ENCODE measurements at regions of chr17 and their contacts with region 1.

Region 1: DNA sequence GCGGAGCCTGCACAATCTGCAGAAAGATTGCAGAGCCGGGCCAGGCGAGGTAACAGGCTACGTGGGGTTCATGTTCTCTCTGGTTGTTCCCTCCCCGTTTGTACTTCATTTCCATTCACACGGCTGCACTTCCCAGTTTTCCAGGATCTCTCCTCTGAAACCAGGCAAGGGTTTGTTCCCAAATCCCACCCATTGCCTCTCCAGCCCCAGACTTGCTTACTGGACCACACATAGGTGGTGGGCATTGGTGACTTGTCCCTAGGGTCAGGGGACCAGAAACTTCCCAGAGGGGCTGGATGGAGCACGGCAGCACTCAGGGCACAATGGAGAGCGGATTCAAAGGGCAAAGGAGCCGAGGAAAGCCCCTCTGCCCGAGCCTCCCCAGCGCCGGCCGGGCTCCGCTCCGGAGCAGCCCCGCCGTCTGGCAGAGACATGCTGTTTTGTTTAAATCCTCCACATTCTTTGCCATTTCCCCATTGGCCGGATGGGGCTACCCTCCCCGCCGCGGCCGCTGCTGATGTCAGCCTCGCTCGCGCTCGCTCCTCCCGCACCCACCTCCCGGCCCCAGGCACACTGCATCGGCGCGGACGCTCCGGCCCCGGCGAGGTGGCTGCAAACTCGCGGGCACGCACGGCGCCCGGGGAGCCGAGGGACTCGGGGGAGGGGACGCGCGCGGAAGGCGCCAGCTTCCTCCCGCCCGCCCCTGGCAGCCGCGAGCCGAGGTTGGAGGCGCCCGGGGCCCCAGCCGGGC is at the start of gene PITPNC1:
- DNase-seq: peak; percentile 93
- ATAC-seq: peak; percentile 84
- total RNA-seq, gene PITPNC1: 13.8 TPM

Region 2: DNA sequence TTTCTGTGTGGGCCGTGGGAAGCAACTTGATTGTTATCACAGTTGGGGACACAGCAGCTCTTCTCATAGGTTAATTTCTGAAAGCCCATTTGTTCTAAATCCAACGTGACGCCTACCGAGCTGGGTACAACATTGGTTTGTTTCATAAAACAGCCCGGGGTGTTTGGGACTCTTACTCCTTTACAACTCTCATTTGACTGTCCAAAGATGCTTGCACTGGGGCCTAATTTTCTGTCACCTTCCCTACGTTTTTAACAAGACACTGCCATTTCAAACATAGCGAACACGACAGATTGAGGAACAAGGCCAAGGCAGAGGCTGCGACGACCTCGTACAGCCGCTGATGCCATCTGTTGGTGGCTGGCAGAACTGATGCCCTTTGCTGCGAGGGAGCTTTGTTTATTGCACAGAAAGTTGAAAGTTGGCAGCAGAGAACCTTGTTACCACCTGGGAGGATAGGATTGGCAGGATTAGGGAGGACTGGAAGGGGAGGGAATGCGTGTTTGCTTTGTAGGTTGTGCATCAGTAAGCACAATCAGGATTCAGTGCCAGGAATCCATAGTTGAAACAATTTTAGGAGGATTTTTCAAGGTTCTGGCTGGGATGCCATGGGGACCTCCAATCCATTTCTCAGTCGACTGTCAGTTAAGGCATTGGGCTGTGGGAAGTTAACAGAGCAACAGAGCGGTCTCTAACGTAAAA is 98.5 kb after region 1 on chr17:
- intact Hi-C with region 1: loop called (anchors 1 kb)
- DNase-seq: peak; percentile 84
- ATAC-seq: peak; percentile 68

Region 3: DNA sequence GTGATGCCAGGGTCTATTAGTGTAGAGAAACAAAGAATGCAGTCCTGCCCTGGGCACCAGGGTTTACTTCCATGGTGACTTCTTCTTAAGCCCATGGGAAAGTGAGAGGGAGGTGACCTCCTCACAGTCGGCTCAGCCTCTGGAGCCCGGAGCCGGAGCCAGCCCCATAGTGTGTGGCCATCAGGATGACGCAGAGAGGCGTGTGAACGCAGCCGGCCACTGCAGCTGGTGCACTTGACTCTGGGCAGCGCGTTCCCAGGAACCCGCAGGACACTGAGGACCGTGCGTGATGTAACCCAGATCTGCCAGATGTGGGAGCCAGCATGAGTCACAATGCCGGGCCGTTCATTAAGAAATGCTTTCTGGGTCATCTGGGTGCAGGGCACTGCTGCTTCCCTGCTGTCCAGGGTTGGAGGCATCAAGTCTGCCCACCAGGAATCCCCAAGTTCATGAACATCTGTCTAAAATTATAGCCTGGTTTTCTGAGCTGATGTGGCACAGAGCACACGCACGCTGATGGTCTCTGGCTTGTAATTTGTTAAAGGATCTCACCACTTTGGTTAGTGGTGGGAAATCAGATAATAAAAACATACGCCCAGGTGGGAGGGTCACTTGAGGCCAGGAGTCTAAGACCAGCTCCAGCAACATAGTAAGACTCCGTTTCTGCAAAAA is 114.2 kb after region 1 on chr17:
- intact Hi-C with region 1: loop called (anchors 5 kb)
- DNase-seq: peak; percentile 94
- ATAC-seq: peak; percentile 97

Region 4: GRCh38 chr17:67546578-67547527 is 169.9 kb after region 1 on chr17:
- intact Hi-C with region 1: loop called (anchors 5 kb)
- DNase-seq: peak; percentile 79
- ATAC-seq: peak; percentile 73

Region 5: GRCh38 chr17:67602956-67603355 is 226.0 kb after region 1 on chr17:
- intact Hi-C with region 1: loop called (anchors 1 kb)
- DNase-seq: no peak
- ATAC-seq: peak; percentile 23

Region 6: GRCh38 chr17:67629971-67630320 is 253.0 kb after region 1 on chr17:
- intact Hi-C with region 1: loop called (anchors 2 kb)
- DNase-seq: no peak
- ATAC-seq: peak; percentile 51

Region 7: DNA sequence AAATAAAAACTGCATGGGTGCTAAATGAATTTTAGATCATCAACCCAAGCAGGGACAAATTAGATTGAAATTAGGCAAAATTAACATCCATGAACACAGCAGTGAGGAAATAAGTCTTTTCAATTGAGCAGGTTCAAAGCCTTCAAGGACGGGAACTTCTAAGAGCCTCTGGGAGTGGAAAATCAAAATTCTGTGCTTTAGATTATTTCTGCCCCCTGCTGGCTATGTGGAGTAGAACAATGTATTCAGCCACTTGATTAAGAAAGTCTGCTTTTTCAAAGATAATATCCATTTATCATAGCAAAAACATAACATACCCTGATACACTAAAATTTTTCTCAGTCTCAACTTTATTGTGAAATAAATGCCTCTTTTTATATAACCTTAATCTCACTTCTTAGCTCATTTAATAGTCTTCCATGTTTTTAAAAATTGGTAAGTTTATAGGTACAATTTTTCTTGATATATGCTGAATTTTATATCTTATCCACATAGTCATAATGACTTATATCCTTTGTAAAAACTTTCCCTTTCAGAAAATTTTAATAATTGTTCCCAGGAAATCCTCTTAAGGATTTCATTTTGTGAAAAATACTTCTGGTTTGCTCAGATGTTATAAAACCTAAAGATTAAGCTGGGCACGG is 312.7 kb after region 1 on chr17:
- intact Hi-C with region 1: loop called (anchors 1 kb)
- DNase-seq: no peak
- ATAC-seq: peak; percentile 44